Heart right ventricle (tissue), 16 donors: ENCODE measurements at regions of chr13 and their contacts with region 1.

Region 1: DNA sequence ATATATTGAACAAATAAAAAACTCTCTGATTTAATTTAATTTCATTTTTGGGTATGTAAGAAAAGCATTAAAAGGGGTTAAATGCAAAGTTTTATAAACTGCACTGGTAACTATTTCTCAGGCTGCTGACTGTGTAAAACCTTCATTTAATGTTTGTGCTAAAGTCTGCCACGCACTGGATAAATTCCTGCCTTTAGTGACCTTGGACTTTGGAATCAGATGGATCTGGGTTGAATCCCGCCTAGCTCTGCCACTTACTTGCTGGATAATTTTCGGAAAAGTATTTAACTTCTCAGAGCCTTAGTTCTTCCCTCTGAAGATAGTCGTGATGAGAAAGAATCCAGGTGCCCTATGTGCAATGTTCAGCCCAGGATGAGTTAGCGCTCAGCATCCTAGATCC is 58.6 kb downstream of the RASL11A start:
- DNase-seq: no peak
- ATAC-seq: no peak
- H3K4me3 ChIP-seq: no peak overlapping the region
- H3K27ac ChIP-seq: no peak overlapping the region
- H3K4me1 ChIP-seq: no peaks in the 10 kb centered on the region
- H3K27me3 ChIP-seq: peaks cover 0 to 20% (median 14%) of the 10 kb centered on the region in 7 donors
- CTCF ChIP-seq: no peak

Region 2: GRCh38 chr13:25803641-25804040 is 1525.6 kb before region 1 on chr13:
- intact Hi-C with region 1: loop called in 1 of 10 experiments (anchors 5 kb)
- DNase-seq: no peak
- ATAC-seq: no peak
- H3K4me3 ChIP-seq: no peak overlapping the region
- H3K27ac ChIP-seq: no peak overlapping the region
- H3K4me1 ChIP-seq: no peaks in the 10 kb centered on the region
- H3K27me3 ChIP-seq: peaks cover 0 to 20% (median 4%) of the 10 kb centered on the region in 7 donors
- CTCF ChIP-seq: no peak

Region 3: GRCh38 chr13:27644302-27644701 is 315.1 kb after region 1 on chr13:
- intact Hi-C with region 1: no loop called
- DNase-seq: no peak
- ATAC-seq: peak in 5 of 8 donors; percentile 25 to 81 (median 57)
- H3K4me3 ChIP-seq: no peak overlapping the region
- H3K27ac ChIP-seq: no peak overlapping the region
- H3K4me1 ChIP-seq: peaks cover 0 to 34% (median 20%) of the 10 kb centered on the region in 9 donors
- H3K27me3 ChIP-seq: no peaks in the 10 kb centered on the region
- CTCF ChIP-seq: no peak